Aorta (tissue), 5 donors: ENCODE measurements at regions of chr2 and their contacts with region 1.

Region 1: DNA sequence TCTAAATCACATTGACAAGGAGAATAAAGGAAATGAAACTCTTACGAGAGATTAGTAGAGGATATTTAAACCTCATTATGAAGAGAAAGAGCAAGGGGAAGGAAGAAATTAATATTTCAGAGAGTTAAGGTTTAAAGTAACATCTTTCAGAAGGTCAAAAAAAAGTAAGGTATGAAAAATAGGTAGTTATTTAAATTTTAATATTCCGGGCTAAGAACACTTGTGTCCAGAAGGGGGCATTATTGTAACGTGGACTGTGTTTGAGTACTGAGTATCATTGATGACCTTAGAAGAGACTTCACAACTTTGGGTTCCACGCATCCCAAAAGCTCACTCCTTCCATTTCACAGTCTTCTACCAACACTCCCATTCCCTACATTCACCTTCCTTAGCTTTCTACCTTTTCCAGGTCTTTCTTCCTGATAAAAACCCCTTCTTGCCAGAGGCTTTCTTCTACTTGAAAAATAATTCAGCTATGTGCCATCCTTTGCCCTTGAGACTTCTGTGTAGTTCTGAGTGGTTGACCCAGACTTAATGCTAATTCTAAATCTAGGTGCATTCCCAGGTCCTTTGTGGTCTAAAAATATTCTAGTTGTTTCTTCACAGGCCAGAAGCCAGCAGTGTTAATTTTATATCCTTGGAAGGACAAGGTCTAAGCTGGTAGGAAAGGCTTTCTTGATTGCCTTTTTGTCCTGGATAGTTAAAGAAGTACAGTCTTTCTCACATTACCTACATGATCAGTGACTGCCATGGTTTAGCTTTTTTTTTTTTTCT is 16.5 kb downstream of the DYNC1I2 start:
- DNase-seq: no peak
- ATAC-seq: no peak
- H3K4me3 ChIP-seq: no peak overlapping the region
- H3K27ac ChIP-seq: no peak overlapping the region
- H3K4me1 ChIP-seq: peaks cover 0 to 2% of the 10 kb centered on the region in 2 donors
- H3K27me3 ChIP-seq: no peaks in the 10 kb centered on the region

Region 2: GRCh38 chr2:172102391-172103278 is 398.9 kb after region 1 on chr2 and contains the start of gene DLX2:
- intact Hi-C with region 1: loop called in 1 of 2 experiments (anchors 10 kb)
- DNase-seq: peak; percentile 89 to 90
- ATAC-seq: peak; percentile 47
- H3K4me3 ChIP-seq: peak within 1 kb of the TSS in 1 of 2 donors; percentile 30
- H3K27ac ChIP-seq: no peak within 1 kb of the TSS
- H3K4me1 ChIP-seq: no peaks in the 10 kb centered on the region
- H3K27me3 ChIP-seq: no peaks in the 10 kb centered on the region
- total RNA-seq, gene DLX2: not detected